ENCODE measurements at regions of chr1 and their contacts with region 1.

Region 1: GRCh38 chr1:68120136-68120791 is 69.8 kb upstream of the DIRAS3 start:
- DNase-seq: peak in 1 of 2 donors; percentile 80
- H3K4me3 ChIP-seq: no peak overlapping the region
- H3K27ac ChIP-seq: peak overlapping the region in 1 of 2 donors; percentile 50
- H3K4me1 ChIP-seq: peaks cover 0 to 7% of the 10 kb centered on the region in 2 donors
- H3K27me3 ChIP-seq: no peaks in the 10 kb centered on the region
- CTCF ChIP-seq: peak; percentile 75 to 89 (median 82)

Region 2: GRCh38 chr1:68173911-68174737 is 53.9 kb after region 1 on chr1:
- intact Hi-C with region 1: loop called (anchors 5 kb)
- DNase-seq: peak in 1 of 2 donors; percentile 86
- H3K4me3 ChIP-seq: peak overlapping the region; percentile 23 to 28
- H3K27ac ChIP-seq: peak overlapping the region; percentile 58 to 66
- H3K4me1 ChIP-seq: peaks cover 5 to 47% of the 10 kb centered on the region in 2 donors
- H3K27me3 ChIP-seq: no peaks in the 10 kb centered on the region
- CTCF ChIP-seq: no peak

Region 3: GRCh38 chr1:68321084-68321685 is 200.9 kb after region 1 on chr1:
- intact Hi-C with region 1: loop called (anchors 1 kb)
- DNase-seq: peak in 1 of 2 donors; percentile 79
- H3K4me3 ChIP-seq: no peak overlapping the region
- H3K27ac ChIP-seq: no peak overlapping the region
- H3K4me1 ChIP-seq: peaks cover 0 to 2% of the 10 kb centered on the region in 2 donors
- H3K27me3 ChIP-seq: no peaks in the 10 kb centered on the region
- CTCF ChIP-seq: peak; percentile 36 to 70 (median 51)

Region 4: GRCh38 chr1:68346188-68346808 is 226.0 kb after region 1 on chr1:
- intact Hi-C with region 1: loop called (anchors 1 kb)
- DNase-seq: no peak
- H3K4me3 ChIP-seq: no peak overlapping the region
- H3K27ac ChIP-seq: no peak overlapping the region
- H3K4me1 ChIP-seq: no peaks in the 10 kb centered on the region
- H3K27me3 ChIP-seq: no peaks in the 10 kb centered on the region
- CTCF ChIP-seq: peak; percentile 19 to 49 (median 42)

Region 5: DNA sequence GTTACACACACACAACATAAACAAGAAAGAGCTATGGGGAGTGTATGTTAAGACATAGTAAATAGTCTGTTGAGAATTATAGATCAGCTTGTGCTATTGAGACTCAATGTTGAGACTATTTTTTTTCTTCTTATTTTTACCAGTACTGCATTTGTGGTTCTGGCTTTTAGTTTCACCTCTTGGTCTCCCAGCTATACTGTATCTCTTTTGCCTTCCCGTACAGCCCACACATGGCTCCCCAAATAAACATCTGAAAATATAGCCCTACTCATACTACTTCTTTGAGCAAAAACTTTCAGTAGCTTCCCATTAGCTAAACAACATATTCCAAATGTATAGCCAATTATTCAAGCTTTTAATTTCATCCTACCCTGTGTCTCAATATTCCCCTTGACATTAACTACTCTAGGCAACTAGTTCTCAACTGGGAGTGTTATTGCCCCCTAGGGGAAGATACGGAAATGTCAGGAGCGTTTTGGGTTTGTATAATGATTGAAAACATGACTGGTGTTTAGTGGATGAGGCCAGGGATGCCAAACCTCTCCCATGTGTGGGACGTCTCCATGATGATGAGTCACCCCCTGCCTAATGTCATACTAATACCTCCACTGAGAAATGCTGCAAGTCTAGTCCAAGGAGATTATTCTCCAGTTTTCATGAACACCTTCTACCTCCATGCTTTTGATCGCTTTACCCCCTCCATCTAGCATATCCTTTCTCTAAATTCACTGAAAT is 322.7 kb after region 1 on chr1:
- intact Hi-C with region 1: loop called (anchors 5 kb)
- DNase-seq: peak in 1 of 2 donors; percentile 64
- H3K4me3 ChIP-seq: no peak overlapping the region
- H3K27ac ChIP-seq: no peak overlapping the region
- H3K4me1 ChIP-seq: no peaks in the 10 kb centered on the region
- H3K27me3 ChIP-seq: no peaks in the 10 kb centered on the region
- CTCF ChIP-seq: peak; percentile 10 to 57 (median 35)

Measured in ascending aorta (tissue), 2 donors.